ENCODE measurements at regions of chr12 and their contacts with region 1.

Region 1: GRCh38 chr12:117367011-117367638 is 5.7 kb upstream of the NOS1 start:
- DNase-seq: no peak
- H3K4me3 ChIP-seq: no peak overlapping the region
- H3K27ac ChIP-seq: no peak overlapping the region
- H3K4me1 ChIP-seq: no peaks in the 10 kb centered on the region
- H3K27me3 ChIP-seq: peaks cover 0 to 69% (median 2%) of the 10 kb centered on the region in 4 donors
- CTCF ChIP-seq: peak; percentile 51 to 92 (median 88)
- POLR2A ChIP-seq: no peak

Region 2: DNA sequence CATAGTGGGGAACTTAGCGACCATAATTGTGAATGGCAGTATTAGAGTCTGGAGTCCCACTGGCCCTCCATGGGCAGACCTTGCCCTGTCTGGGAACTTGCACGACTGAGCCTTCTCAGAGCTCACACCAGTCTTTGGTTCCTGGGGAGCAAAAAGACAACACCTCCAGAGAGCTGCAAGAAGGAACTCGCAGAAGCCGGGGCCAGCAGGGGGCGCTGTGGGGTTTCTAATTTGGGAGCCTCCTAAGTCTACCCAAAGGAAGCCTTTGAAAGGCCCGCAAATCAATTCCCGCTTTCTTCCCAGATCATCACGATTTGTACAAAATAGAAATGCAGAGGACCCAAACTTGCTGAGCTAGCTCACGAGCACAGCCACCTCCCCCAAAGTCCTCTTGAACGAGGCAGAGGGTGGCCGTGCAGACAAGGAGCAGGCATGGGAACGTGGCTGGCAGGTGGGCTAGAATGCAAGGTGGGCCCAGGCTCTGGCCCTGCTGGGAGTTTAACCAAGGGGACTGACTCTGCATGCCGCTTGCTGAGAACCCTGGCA is 130.6 kb before region 1 on chr12:
- intact Hi-C with region 1: loop called (anchors 5 kb)
- DNase-seq: no peak
- H3K4me3 ChIP-seq: no peak overlapping the region
- H3K27ac ChIP-seq: no peak overlapping the region
- H3K4me1 ChIP-seq: no peaks in the 10 kb centered on the region
- H3K27me3 ChIP-seq: peaks cover 0 to 50% (median 0%) of the 10 kb centered on the region in 4 donors
- CTCF ChIP-seq: peak; percentile 34 to 81 (median 68)
- POLR2A ChIP-seq: no peak

Region 3: GRCh38 chr12:117279606-117280005 is 87.5 kb before region 1 on chr12:
- intact Hi-C with region 1: no loop called
- DNase-seq: no peak
- H3K4me3 ChIP-seq: no peak overlapping the region
- H3K27ac ChIP-seq: no peak overlapping the region
- H3K4me1 ChIP-seq: peaks cover 0 to 7% (median 0%) of the 10 kb centered on the region in 3 donors
- H3K27me3 ChIP-seq: peaks cover 0 to 28% (median 0%) of the 10 kb centered on the region in 4 donors
- CTCF ChIP-seq: no peak
- POLR2A ChIP-seq: no peak

Region 4: DNA sequence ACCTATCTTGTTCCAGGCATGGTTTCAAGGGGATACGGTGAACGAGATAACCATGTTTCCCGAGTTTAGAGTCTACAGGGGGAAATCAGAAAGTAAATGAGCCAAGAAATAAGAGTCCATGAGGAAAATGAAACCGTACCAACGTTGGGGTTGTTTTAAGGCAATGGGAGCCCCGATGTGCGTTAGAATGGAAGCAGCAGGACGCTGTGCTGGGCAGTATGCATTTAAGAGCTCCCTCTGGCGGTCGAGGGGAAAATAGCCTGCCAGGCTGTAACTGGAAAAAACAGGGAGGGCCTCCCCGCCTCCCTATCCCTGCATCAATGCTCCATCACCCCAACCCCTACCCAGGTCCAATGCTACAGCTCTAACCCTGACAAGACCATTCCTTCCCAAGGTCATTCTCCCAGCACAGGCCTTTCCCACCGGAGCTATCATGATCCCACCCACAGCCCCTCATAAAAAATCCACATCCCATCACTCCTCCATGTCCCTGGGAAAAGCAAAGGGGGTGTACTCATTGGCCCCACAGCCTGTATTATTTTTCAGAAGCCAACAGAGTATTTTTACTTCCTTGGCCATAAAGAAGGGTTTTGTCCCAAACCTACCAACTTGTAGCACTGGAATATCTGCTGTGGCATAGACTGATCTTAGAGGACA is 220.6 kb after region 1 on chr12:
- intact Hi-C with region 1: loop called (anchors 5 kb)
- DNase-seq: no peak
- H3K4me3 ChIP-seq: no peak overlapping the region
- H3K27ac ChIP-seq: no peak overlapping the region
- H3K4me1 ChIP-seq: peaks cover 0 to 17% (median 10%) of the 10 kb centered on the region in 3 donors
- H3K27me3 ChIP-seq: peaks cover 0 to 29% (median 0%) of the 10 kb centered on the region in 4 donors
- CTCF ChIP-seq: peak; percentile 49 to 83 (median 76)
- POLR2A ChIP-seq: no peak

Region 5: DNA sequence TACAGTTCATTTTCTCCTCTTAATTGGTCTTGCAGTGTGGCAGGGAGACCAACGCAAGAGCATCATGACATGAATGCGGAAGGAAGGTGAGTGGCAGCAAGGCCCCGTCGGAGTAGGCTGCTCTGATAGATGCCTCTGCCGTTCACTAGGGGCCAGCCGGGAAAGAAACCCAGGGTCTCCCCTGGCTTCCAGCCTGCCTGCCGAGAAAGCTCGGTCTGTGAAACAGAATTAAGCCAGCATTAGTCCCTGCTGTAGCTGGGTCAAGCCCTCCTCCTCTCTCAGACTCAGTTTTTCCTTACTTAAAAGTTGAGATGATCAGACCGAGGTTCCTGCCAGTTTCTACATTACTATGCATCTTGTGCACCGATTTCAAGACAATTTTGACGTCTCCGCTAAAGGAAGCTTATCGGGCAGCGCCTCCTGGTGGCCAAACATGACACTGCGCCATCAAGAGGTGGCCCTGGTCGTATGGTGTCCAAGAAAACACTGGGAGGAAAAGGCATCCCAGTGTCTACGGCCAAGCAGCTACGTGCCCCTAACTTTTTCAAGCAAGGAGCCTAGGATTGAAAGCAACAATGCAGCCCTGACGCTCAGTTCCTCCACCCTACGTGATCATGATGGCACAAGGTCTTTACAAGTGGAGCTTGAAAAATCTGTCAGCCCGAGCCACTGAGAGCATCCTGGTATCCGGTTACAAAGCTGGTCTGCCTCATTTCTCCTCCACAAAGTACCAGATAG is 470.0 kb after region 1 on chr12:
- intact Hi-C with region 1: loop called (anchors 5 kb)
- DNase-seq: no peak
- H3K4me3 ChIP-seq: peak overlapping the region in 1 of 4 donors; percentile 15
- H3K27ac ChIP-seq: no peak overlapping the region
- H3K4me1 ChIP-seq: peaks cover 0 to 4% (median 0%) of the 10 kb centered on the region in 3 donors
- H3K27me3 ChIP-seq: peaks cover 0 to 63% (median 0%) of the 10 kb centered on the region in 4 donors
- CTCF ChIP-seq: peak; percentile 82 to 96 (median 92)
- POLR2A ChIP-seq: no peak

Measured in esophagus squamous epithelium (tissue), 5 donors.